ENCODE measurements at regions of chr16 and their contacts with region 1.

Region 1: DNA sequence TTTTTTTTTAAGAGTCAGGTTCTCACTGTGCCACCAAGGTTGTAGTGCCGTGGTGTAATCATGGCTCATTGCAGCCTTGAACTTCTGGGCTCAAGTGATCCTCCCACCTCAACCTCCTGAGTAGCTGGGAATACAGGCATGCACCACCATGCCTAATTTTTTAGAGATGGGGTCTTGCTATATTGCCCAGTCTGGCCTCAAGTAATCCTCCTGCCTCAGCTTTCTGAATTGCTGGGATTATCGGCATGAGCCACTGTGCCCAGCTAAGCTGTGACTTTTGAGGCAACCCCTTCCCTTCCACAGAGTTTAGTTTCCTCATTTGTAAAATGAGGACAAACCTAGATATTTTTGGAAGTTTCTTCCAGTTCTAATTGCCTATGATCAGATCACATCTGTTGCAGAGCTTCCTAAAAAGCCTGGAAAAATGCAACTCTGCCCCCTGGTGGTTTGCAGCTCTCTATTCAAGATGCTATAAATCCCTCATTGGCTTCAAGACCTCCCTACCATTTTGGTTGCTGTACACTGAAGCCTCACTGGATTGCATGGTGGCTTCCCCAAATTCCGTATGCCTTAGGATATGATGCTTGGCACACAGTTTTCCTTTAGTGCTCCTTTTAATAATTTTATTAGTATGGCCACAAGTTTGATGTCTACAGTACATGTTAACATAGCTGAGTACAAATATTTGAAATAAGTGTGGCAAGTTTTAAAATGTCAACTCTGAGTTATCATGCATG is 19.3 kb downstream of the GDE1 start:
- DNase-seq: peak in 1 of 2 donors; percentile 73
- ATAC-seq: peak in 5 of 8 donors; percentile 52 to 79 (median 68)
- H3K4me3 ChIP-seq: no peak overlapping the region
- H3K27ac ChIP-seq: no peak overlapping the region
- H3K4me1 ChIP-seq: peaks cover 0 to 12% (median 0%) of the 10 kb centered on the region in 9 donors
- H3K27me3 ChIP-seq: no peaks in the 10 kb centered on the region
- CTCF ChIP-seq: peak; percentile 55 to 84 (median 74)

Region 2: GRCh38 chr16:19167710-19168370 is 334.7 kb before region 1 on chr16 and contains the start of gene SYT17:
- intact Hi-C with region 1: loop called in 2 of 10 experiments (anchors 2 to 5 kb)
- DNase-seq: peak; percentile 50 to 77
- ATAC-seq: peak; percentile 88 to 93 (median 91)
- H3K4me3 ChIP-seq: peak within 1 kb of the TSS; percentile 45 to 64 (median 58)
- H3K27ac ChIP-seq: peak within 1 kb of the TSS in 5 of 10 donors; percentile 54 to 71 (median 66)
- H3K4me1 ChIP-seq: peaks cover 0 to 24% (median 15%) of the 10 kb centered on the region in 9 donors
- H3K27me3 ChIP-seq: peaks cover 0 to 61% (median 27%) of the 10 kb centered on the region in 7 donors
- CTCF ChIP-seq: peak; percentile 48 to 84 (median 68)
- total RNA-seq, gene SYT17: 0.20 to 1.3 (median 0.69) TPM

Region 3: DNA sequence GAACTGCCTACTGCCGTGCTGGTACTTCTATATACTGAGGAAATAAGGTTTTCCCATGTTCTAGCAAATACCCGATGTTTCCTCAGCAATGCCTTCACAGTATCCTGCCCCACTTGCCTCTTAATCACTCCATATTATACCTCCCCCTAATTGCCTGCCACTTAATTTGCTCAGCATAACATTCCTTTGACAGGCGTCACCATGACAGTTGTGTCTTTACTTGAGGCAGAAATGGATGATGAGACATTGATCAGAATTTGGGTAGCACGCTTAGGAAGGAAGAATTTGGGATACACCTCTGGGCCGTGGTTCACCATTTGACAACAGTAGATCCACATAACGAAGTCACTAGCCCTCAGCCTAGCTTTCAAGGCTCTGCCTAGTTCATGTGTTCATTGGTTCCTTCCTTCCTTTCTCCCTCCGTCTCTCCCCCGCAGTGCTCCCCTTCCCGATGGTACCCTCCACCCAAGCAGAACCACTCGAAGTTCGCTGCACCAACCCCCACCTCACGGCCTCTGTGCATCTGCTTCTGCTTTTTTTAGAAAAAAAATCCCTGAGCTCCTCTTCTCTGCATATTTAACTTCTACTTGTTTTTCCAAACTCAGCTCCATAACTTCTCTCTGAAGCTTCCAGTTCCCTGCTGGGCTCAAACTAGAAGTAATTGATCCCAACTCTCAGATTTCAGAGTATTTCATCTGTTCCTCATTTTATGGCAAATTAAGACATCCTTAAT is 234.9 kb after region 1 on chr16:
- intact Hi-C with region 1: no loop called
- DNase-seq: no peak
- ATAC-seq: peak in 1 of 8 donors; percentile 61
- H3K4me3 ChIP-seq: no peak overlapping the region
- H3K27ac ChIP-seq: peak overlapping the region in 2 of 10 donors; percentile 3 to 25
- H3K4me1 ChIP-seq: peaks cover 0 to 44% (median 22%) of the 10 kb centered on the region in 9 donors
- H3K27me3 ChIP-seq: no peaks in the 10 kb centered on the region
- CTCF ChIP-seq: no peak